ENCODE measurements at regions of chr6 and their contacts with region 1.

Region 1: GRCh38 chr6:133184798-133185372 is 56.3 kb upstream of the EYA4 start:
- DNase-seq: peak; percentile 37
- H3K4me3 ChIP-seq: no peak overlapping the region
- H3K27ac ChIP-seq: no peak overlapping the region
- H3K4me1 ChIP-seq: no peaks in the 10 kb centered on the region
- H3K27me3 ChIP-seq: no peaks in the 10 kb centered on the region
- CTCF ChIP-seq: peak; percentile 76

Region 2: GRCh38 chr6:132830334-132830751 is 354.5 kb before region 1 on chr6:
- CTCF ChIA-PET with region 1: interaction called, 3 read pairs
- POLR2A ChIA-PET with region 1: no interaction called
- intact Hi-C with region 1: loop called (anchors 10 kb)
- DNase-seq: peak; percentile 64
- H3K4me3 ChIP-seq: no peak overlapping the region
- H3K27ac ChIP-seq: no peak overlapping the region
- H3K4me1 ChIP-seq: no peaks in the 10 kb centered on the region
- H3K27me3 ChIP-seq: no peaks in the 10 kb centered on the region
- CTCF ChIP-seq: peak; percentile 66

Region 3: GRCh38 chr6:133286765-133287164 is 101.9 kb after region 1 on chr6:
- CTCF ChIA-PET with region 1: no interaction called
- POLR2A ChIA-PET with region 1: no interaction called
- intact Hi-C with region 1: loop called (anchors 10 kb)
- DNase-seq: peak; percentile 80
- H3K4me3 ChIP-seq: no peak overlapping the region
- H3K27ac ChIP-seq: no peak overlapping the region
- H3K4me1 ChIP-seq: peaks cover 5% of the 10 kb centered on the region
- H3K27me3 ChIP-seq: no peaks in the 10 kb centered on the region
- CTCF ChIP-seq: peak; percentile 72

Region 4: DNA sequence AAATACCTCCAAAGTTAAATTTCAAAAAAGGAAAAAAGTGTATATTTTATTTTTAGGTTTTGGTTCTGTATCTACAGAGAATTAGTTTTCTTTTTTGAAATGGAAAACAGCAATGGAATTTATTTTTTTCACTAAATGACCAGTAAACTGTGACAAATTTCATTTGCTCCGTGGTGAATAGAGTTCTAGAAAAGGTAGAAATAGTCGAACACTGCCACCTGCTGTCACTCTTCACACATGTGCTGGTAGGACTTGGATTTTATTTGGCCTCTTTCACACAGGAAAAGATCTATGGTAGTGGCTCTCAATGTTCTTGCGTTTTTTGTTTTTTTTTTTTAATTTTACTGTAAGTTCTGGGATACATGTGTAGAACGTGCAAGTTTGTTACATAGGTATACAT is 368.8 kb after region 1 on chr6:
- CTCF ChIA-PET with region 1: no interaction called
- POLR2A ChIA-PET with region 1: no interaction called
- intact Hi-C with region 1: loop called (anchors 5 kb)
- DNase-seq: peak; percentile 64
- H3K4me3 ChIP-seq: no peak overlapping the region
- H3K27ac ChIP-seq: no peak overlapping the region
- H3K4me1 ChIP-seq: no peaks in the 10 kb centered on the region
- H3K27me3 ChIP-seq: no peaks in the 10 kb centered on the region
- CTCF ChIP-seq: peak; percentile 69